CD8-positive, alpha-beta T cell (primary cell): ENCODE measurements at regions of chr2 and their contacts with region 1.

Region 1: GRCh38 chr2:43178602-43179542 is 47.5 kb downstream of the ZFP36L2 start:
- DNase-seq: peak in 2 of 9 experiments; percentile 45 to 63
- ATAC-seq: no peak
- H3K4me3 ChIP-seq: no peak overlapping the region
- H3K4me3 Mint-ChIP-seq: peak overlapping the region; percentile 45
- H3K27ac ChIP-seq: peak overlapping the region in 1 of 2 experiments; percentile 17
- H3K27ac Mint-ChIP-seq: peak overlapping the region; percentile 90
- H3K4me1 ChIP-seq: peaks cover 57% of the 10 kb centered on the region
- H3K4me1 Mint-ChIP-seq: peaks cover 66% of the 10 kb centered on the region
- H3K27me3 ChIP-seq: no peaks in the 10 kb centered on the region
- H3K27me3 Mint-ChIP-seq: no peaks in the 10 kb centered on the region
- CTCF ChIP-seq: no peak

Region 2: GRCh38 chr2:43032213-43033015 is 146.5 kb before region 1 on chr2:
- CTCF ChIA-PET with region 1: no interaction called
- POLR2A ChIA-PET with region 1: no interaction called
- intact Hi-C with region 1: no loop called
- DNase-seq: no peak
- ATAC-seq: no peak
- H3K4me3 ChIP-seq: peak overlapping the region in 1 of 2 experiments; percentile 16
- H3K4me3 Mint-ChIP-seq: peak overlapping the region; percentile 47
- H3K27ac ChIP-seq: no peak overlapping the region
- H3K27ac Mint-ChIP-seq: peak overlapping the region; percentile 68
- H3K4me1 ChIP-seq: peaks cover 23% of the 10 kb centered on the region
- H3K4me1 Mint-ChIP-seq: peaks cover 21% of the 10 kb centered on the region
- H3K27me3 ChIP-seq: no peaks in the 10 kb centered on the region
- H3K27me3 Mint-ChIP-seq: no peaks in the 10 kb centered on the region
- CTCF ChIP-seq: no peak

Region 3: DNA sequence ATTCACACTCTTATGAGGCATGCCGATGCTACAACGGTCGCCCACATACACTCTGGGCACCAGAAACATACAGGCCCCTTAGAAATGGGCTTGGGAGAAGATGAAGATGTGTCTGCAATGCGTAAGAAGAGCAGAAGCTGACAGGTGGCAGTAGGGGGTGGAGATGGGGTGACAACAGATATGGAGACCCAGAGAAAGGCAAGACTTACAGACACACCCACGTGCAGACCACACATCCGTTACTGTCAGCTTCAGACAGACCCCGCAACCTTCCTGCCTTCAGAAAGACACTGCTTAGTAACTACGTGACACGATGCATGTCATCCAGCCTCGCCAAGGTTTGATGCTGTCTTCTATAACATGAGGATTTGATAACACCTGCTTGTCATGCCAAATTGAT is 42.0 kb before region 1 on chr2:
- CTCF ChIA-PET with region 1: interaction called, 9 read pairs
- POLR2A ChIA-PET with region 1: interaction called, 245 read pairs
- intact Hi-C with region 1: loop called (anchors 1 kb)
- DNase-seq: peak; percentile 68 to 97 (median 84)
- ATAC-seq: peak; percentile 67
- H3K4me3 ChIP-seq: peak overlapping the region in 1 of 2 experiments; percentile 3
- H3K4me3 Mint-ChIP-seq: peak overlapping the region; percentile 62
- H3K27ac ChIP-seq: peak overlapping the region; percentile 88 to 90
- H3K27ac Mint-ChIP-seq: peak overlapping the region; percentile 100
- H3K4me1 ChIP-seq: peaks cover 95% of the 10 kb centered on the region
- H3K4me1 Mint-ChIP-seq: peaks cover 85% of the 10 kb centered on the region
- H3K27me3 ChIP-seq: no peaks in the 10 kb centered on the region
- H3K27me3 Mint-ChIP-seq: no peaks in the 10 kb centered on the region
- CTCF ChIP-seq: peak; percentile 21

Region 4: DNA sequence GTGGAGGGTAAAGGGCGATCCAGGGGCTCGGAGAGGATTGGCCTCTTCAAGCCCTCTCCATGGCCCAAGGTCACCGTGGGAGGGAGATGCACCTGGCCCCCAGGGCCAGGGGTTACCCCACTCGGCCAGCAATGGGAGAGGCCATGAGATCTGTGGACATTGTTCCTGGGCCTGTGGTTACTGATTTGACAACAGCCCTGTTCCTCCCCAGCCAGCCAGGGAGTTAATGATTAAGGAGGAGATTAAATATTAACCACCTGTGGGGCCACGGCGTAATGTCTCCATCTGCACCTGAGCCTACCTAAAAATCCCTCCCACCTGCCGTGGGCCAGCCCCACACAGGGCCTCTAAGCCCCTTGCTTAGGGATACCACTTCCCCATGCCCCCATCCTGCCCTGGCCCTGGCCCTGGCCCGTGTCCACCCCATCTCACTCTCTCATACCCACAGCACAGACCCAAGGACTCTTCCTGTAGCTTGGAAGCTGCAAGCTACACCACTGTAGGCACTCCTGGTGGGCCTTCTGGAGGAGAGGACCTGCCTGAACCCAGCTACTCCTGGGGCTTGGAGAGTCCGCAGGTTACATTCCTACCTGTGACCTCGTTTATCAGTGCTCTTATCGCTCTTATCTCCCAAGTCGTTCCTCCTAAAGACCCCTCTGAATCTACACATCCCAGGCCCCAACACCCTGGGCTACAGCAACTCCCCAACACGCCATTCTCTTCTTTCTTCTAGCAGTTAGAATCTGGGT is 15.4 kb after region 1 on chr2:
- CTCF ChIA-PET with region 1: interaction called, 13 read pairs
- POLR2A ChIA-PET with region 1: interaction called, 44 read pairs
- intact Hi-C with region 1: loop called (anchors 1 kb)
- DNase-seq: no peak
- ATAC-seq: peak; percentile 0
- H3K4me3 ChIP-seq: peak overlapping the region; percentile 40 to 52
- H3K4me3 Mint-ChIP-seq: peak overlapping the region; percentile 83
- H3K27ac ChIP-seq: peak overlapping the region; percentile 68 to 88
- H3K27ac Mint-ChIP-seq: peak overlapping the region; percentile 98
- H3K4me1 ChIP-seq: peaks cover 65% of the 10 kb centered on the region
- H3K4me1 Mint-ChIP-seq: peaks cover 61% of the 10 kb centered on the region
- H3K27me3 ChIP-seq: no peaks in the 10 kb centered on the region
- H3K27me3 Mint-ChIP-seq: no peaks in the 10 kb centered on the region
- CTCF ChIP-seq: no peak